Dorsolateral prefrontal cortex (tissue), 120 donors: ENCODE measurements at regions of chr6 and their contacts with region 1.

Region 1: DNA sequence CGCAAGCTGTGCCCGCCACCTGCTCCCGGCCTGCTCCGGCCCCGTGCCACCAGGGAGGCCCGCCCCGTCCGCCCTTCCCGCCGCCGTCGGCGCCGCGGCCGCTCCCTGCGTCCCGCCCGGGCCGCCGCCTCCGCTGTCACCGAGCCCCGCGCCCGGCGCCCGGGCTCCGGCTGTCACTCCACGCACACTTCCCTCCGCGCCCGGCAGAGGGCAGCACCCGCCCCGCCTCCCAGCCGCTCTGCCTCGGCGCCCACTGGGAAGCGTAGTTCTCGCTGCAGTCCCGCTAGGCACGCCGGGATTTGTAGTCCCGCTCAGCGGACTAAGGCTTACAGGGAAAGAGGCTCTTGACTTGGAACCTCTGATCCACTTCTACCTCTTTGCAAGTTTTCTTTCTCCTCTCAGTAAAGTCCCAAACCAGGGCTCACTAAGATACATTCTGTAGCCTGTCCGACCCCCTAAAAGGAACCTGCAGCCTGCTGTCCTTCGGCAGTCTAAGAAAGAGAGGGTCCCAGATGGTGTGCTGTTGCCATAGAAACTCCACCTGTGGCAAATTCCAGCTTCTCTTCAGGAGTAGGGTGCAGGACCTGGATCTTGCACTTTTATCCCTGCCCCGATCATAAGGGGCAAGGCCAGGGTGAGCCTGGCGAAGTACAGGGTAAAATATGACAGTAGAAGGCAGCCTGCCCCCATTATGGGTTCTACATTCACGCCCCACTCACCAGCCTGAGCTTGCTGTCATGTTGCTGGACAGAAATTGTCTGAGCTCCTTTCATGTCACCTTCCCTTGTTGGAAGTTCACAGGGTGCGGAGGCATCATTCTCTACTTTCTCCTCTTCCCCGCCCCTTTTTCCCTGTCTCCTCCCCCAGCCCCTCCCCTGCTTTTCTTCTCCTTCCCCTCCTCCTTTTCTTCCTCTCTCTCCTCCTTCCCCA is at the start of gene TFEB:
- DNase-seq: peak; percentile 95 to 97 (median 96)
- H3K4me3 ChIP-seq: peak within 1 kb of the TSS; percentile 51 to 98 (median 85)
- H3K27ac ChIP-seq: peak within 1 kb of the TSS; percentile 90 to 100 (median 99)
- H3K27me3 ChIP-seq: no peaks in the 10 kb centered on the region
- CTCF ChIP-seq: peak; percentile 73 to 99 (median 88)
- total RNA-seq, gene TFEB: 13.9 to 125 (median 40.5) TPM

Region 2: DNA sequence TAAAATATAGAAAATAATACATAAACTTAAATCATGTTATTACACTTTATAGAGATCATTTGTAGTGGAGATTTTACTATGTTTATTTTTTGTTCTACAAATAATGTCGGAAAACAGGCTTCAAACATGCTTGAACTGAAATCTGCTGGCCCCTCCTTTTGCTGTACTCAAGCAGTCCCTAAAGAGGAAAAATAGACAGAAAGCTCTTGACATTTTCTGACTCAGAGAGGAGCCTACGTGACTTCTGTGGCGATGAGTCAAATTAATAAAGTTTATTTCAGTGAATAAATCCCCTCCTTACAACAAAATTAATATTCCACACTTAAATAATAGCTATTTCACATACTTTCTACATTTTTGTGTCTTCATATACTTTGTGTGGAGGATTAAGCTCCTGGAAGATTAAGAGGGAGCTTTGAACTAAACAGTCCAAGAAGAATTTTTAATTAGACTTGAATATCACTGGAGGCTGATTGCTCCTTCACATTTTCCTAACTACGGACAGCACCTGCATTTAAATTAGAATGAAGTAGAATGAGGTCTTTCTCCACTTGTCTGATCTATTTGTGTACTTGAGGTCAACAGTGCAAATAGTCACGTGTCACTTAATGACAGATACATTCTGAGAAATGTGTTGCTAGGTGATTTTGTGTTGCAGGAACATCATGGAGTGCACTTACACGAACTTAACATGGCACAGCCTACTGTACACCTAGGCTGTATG is 447.5 kb before region 1 on chr6:
- intact Hi-C with region 1: no loop called
- DNase-seq: no peak
- H3K4me3 ChIP-seq: no peak overlapping the region
- H3K27ac ChIP-seq: no peak overlapping the region
- H3K27me3 ChIP-seq: peaks cover 0 to 16% (median 0%) of the 10 kb centered on the region in 45 donors
- CTCF ChIP-seq: no peak

Region 3: DNA sequence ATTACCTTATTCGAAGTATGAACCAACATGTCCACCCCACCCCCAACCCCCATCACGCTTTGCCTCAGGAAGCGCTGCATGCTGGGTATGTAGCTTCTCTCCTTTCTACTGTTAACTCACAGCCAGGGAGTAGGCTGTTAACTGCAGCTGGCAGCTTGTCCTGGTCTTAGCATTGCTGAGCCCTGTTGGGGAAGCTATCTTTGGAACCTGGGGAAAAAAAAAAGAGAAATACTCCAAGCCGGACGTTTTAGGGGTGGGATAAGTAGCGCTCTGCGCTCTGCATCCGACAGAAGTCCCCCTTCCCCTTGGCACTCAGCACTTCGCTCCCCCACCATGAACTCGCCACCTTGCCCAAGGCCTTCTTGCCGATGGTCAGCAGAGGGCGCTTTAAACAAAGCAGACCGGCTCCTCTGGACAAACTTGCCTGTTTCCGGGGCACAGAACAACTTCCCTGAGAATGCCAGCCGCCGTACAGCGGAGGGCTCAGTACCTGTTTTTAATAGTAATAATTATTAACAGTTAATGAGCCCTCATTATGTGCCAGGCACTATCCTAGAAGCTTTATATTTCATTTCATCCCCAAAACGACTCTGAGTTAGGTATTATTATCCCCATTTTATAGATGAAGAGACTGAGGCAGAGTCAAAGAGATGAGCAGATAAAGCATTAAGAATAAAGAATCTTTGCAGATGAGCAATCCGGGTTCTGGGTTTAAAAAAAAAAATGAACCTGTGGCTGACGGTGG is 132.7 kb before region 1 on chr6:
- intact Hi-C with region 1: loop called in 1 of 2 experiments (anchors 2 kb)
- DNase-seq: peak; percentile 58 to 85 (median 76)
- H3K4me3 ChIP-seq: peak overlapping the region in 43 of 59 donors; percentile 2 to 52 (median 29)
- H3K27ac ChIP-seq: peak overlapping the region in 13 of 59 donors; percentile 7 to 52 (median 39)
- H3K27me3 ChIP-seq: no peaks in the 10 kb centered on the region
- CTCF ChIP-seq: peak; percentile 70 to 98 (median 92)

Region 4: GRCh38 chr6:41694815-41695526 is 40.7 kb before region 1 on chr6:
- intact Hi-C with region 1: loop called (anchors 2 to 5 kb)
- DNase-seq: no peak
- H3K4me3 ChIP-seq: peak overlapping the region in 1 of 59 donors; percentile 44
- H3K27ac ChIP-seq: peak overlapping the region; percentile 79 to 100 (median 99)
- H3K27me3 ChIP-seq: no peaks in the 10 kb centered on the region
- CTCF ChIP-seq: peak in 1 of 56 donors; percentile 9

Region 5: GRCh38 chr6:41779793-41780545 is 44.3 kb after region 1 on chr6 and contains the start of gene FRS3:
- intact Hi-C with region 1: loop called (anchors 1 to 5 kb)
- DNase-seq: peak; percentile 95 to 100 (median 99)
- H3K4me3 ChIP-seq: peak within 1 kb of the TSS; percentile 61 to 99 (median 84)
- H3K27ac ChIP-seq: peak within 1 kb of the TSS in 54 of 59 donors; percentile 32 to 94 (median 79)
- H3K27me3 ChIP-seq: no peaks in the 10 kb centered on the region
- CTCF ChIP-seq: peak; percentile 60 to 97 (median 88)
- total RNA-seq, gene FRS3: 20.4 to 52.8 (median 33.0) TPM

Region 6: GRCh38 chr6:41936073-41936837 is 200.6 kb after region 1 on chr6:
- intact Hi-C with region 1: loop called in 1 of 2 experiments (anchors 5 kb)
- DNase-seq: peak; percentile 57 to 85 (median 81)
- H3K4me3 ChIP-seq: peak overlapping the region in 10 of 59 donors; percentile 2 to 34 (median 16)
- H3K27ac ChIP-seq: peak overlapping the region in 50 of 59 donors; percentile 3 to 92 (median 63)
- H3K27me3 ChIP-seq: no peaks in the 10 kb centered on the region
- CTCF ChIP-seq: peak; percentile 55 to 89 (median 80)

Region 7: GRCh38 chr6:42158011-42158410 is 422.3 kb after region 1 on chr6:
- intact Hi-C with region 1: no loop called
- DNase-seq: no peak
- H3K4me3 ChIP-seq: no peak overlapping the region
- H3K27ac ChIP-seq: no peak overlapping the region
- H3K27me3 ChIP-seq: peaks cover 0 to 4% (median 0%) of the 10 kb centered on the region in 45 donors
- CTCF ChIP-seq: no peak